Activated CD8-positive, alpha-beta T cell treated with anti-CD3 and anti-CD28 coated beads for 36 hours (primary cell): ENCODE measurements at regions of chr9 and their contacts with region 1.

Region 1: DNA sequence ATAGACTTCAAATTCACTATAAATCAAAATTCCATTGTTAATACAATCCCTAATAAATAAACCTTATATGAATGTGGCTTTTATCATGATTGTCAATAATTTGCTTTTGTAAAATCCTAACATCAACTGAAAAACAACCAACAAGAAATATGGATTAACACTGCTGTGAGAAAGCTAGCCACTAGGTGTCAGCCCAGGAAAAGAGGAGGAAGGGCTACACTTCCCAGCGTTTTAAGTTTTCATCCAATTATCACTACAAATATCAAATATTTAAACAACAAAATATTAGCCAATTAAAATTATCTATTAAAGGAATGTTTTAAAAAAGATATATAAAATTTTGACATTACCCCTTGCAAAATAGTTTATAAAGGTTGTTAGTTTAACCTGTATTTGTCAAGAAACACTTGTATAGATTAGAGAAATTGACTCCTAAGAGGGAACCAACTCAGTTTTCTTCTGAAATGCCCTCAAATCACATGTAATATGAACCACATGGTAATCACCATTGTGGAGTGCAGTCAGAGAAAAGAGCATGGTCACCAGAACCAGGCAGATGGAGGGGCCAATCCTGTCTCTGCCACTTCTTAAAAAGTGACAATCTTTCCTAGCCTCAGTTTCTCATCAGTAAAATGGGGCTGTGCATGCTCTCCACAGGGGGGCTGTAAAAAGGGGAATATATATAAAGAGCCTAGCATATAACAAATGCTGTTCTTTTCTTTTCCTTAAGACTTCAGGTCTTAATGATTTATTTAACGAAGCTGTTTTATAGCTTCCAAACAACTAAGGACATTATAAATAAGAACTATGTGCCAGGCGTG is 188.2 kb downstream of the CRB2 start:
- DNase-seq: peak; percentile 25
- ATAC-seq: no peak
- H3K4me3 Mint-ChIP-seq: no peak overlapping the region
- H3K27ac Mint-ChIP-seq: no peak overlapping the region
- H3K4me1 Mint-ChIP-seq: peaks cover 9% of the 10 kb centered on the region
- H3K27me3 Mint-ChIP-seq: no peaks in the 10 kb centered on the region
- CTCF ChIP-seq: peak; percentile 87

Region 2: GRCh38 chr9:123401879-123402513 is 142.2 kb before region 1 on chr9:
- CTCF ChIA-PET with region 1: no interaction called
- POLR2A ChIA-PET with region 1: no interaction called
- intact Hi-C with region 1: no loop called
- DNase-seq: peak; percentile 44
- ATAC-seq: peak; percentile 60
- H3K4me3 Mint-ChIP-seq: no peak overlapping the region
- H3K27ac Mint-ChIP-seq: no peak overlapping the region
- H3K4me1 Mint-ChIP-seq: peaks cover 8% of the 10 kb centered on the region
- H3K27me3 Mint-ChIP-seq: no peaks in the 10 kb centered on the region
- CTCF ChIP-seq: peak; percentile 43

Region 3: GRCh38 chr9:123679322-123679987 is 135.2 kb after region 1 on chr9:
- CTCF ChIA-PET with region 1: no interaction called
- POLR2A ChIA-PET with region 1: no interaction called
- intact Hi-C with region 1: no loop called
- DNase-seq: peak; percentile 52
- ATAC-seq: peak; percentile 83
- H3K4me3 Mint-ChIP-seq: no peak overlapping the region
- H3K27ac Mint-ChIP-seq: no peak overlapping the region
- H3K4me1 Mint-ChIP-seq: peaks cover 34% of the 10 kb centered on the region
- H3K27me3 Mint-ChIP-seq: no peaks in the 10 kb centered on the region
- CTCF ChIP-seq: no peak

Region 4: DNA sequence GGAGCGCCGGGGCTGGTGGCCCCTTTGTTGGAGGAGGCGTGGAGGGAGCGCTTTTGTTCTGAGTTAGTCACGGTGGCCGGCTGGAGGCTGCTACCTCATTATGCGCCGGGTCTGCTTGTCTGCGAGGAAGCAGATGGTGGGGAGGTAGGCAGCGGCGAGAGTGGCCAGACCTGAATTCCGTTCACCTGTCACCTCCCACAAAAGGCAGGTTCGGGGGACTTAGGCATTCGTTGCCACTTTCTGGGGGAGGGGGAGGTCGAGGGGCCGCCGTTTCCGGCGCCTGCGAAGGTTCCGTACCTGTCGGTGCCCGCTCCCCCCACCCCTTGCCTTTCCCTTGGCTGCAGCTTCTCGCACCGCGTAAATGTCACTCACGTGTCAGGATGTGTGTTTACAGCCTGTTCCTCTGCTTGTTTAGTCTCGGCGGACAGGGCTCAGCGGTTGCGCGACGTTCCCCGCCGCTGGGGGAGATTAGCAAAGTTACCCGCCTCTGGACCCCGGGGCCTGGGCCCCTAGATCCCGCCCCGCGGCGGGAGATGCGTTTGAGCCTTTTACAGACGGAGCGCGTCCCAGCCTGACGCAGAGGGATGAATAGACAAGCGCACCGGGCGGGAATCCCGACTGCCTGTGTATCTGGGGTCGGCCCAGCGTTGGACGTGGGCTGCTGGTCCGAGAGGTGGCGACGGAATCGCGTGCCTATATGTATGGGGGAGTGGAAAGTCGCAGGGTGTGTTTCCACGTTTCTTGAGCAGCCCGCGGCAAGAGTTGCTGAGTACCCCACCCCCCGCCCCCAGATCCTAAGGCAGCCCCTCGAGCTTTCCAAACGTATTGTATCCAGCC is 464.7 kb after region 1 on chr9:
- CTCF ChIA-PET with region 1: no interaction called
- POLR2A ChIA-PET with region 1: no interaction called
- intact Hi-C with region 1: loop called (anchors 10 kb)
- DNase-seq: peak; percentile 49
- ATAC-seq: peak; percentile 22
- H3K4me3 Mint-ChIP-seq: no peak overlapping the region
- H3K27ac Mint-ChIP-seq: no peak overlapping the region
- H3K4me1 Mint-ChIP-seq: peaks cover 29% of the 10 kb centered on the region
- H3K27me3 Mint-ChIP-seq: peaks cover 75% of the 10 kb centered on the region
- CTCF ChIP-seq: no peak